ENCODE measurements at regions of chr10 and their contacts with region 1.

Region 1: DNA sequence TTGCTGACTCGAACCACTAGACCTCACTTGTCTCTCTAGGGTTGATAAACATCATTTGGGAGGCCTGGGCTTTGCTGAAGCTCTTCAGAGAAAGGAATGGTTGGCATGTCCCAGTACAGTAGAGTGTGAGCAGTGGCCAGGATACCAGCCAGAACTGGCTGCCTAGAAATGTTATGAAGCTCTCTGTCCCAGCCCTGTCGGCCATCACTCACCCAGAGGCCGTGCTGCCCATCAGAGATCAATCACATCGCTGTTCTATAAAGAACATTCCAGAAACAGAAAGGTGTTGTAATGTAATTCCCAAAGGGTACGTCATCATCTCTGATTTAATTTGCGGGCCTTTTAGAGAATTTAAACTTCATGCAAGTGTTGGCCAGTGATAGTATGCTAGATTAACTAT is 111.5 kb downstream of the PRPF18 start:
- DNase-seq: peak in 2 of 5 donors; percentile 44 to 77
- ATAC-seq: peak; percentile 88 to 91 (median 90)
- H3K4me3 ChIP-seq: no peak overlapping the region
- H3K27ac ChIP-seq: peak overlapping the region in 11 of 12 donors; percentile 23 to 78 (median 61)
- H3K4me1 ChIP-seq: peaks cover 0 to 73% (median 31%) of the 10 kb centered on the region in 12 donors
- H3K27me3 ChIP-seq: no peaks in the 10 kb centered on the region
- CTCF ChIP-seq: no peak
- POLR2A ChIP-seq: no peak

Region 2: DNA sequence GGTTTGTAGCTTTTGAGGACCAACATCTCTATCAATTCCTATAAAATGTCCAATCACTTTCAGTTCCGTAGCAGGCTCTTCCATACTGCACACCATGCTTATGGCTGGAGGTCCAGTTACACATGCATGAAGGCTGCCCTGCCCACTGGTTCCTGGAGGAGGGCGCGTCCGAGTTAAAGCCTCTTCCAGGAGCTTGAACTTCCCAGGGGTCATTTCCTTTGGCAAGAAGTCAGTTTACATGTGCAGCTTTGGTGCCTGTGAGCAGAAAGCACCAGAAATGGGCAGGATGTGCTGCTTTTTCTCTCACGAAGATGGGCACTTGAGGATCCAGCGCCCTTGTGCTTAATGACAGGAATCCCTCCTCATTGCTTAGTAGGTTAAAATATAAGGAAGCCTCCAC is 380.7 kb before region 1 on chr10:
- intact Hi-C with region 1: no loop called
- DNase-seq: peak in 2 of 5 donors; percentile 29 to 35
- ATAC-seq: peak in 3 of 4 donors; percentile 52 to 74 (median 61)
- H3K4me3 ChIP-seq: no peak overlapping the region
- H3K27ac ChIP-seq: no peak overlapping the region
- H3K4me1 ChIP-seq: peaks cover 0 to 11% (median 0%) of the 10 kb centered on the region in 12 donors
- H3K27me3 ChIP-seq: no peaks in the 10 kb centered on the region
- CTCF ChIP-seq: no peak
- POLR2A ChIP-seq: peak in 1 of 2 donors; percentile 11

Region 3: DNA sequence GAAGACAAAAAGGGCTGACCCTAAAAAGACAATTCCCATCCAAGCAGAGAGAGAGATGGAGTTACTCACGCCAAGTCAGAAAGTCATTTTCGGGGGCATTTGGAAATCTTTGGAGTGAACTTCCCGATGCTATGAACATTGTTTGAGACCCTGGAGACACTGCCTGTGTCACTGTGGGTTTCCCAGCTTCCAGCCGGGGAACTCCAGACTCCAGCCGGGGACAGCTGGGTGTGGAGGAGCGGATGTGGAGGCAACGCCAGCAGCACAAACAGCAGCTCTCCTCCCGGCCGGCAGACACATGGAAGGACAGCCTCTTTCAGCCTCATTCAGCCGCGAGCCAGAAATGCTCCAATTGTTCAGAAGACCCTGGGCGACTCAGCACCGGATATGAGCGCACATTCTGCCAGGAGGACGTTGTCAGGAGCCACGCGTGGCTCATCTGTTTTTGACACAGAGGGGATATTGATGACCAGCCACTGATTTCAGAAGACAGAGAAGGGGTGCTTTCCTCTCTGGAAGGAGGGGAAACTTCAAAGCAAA is 13.9 kb before region 1 on chr10:
- intact Hi-C with region 1: loop called in 2 of 10 experiments (anchors 1 to 2 kb)
- DNase-seq: peak; percentile 89 to 94 (median 90)
- ATAC-seq: peak; percentile 60 to 77 (median 68)
- H3K4me3 ChIP-seq: peak overlapping the region in 1 of 12 donors; percentile 0
- H3K27ac ChIP-seq: peak overlapping the region; percentile 60 to 95 (median 84)
- H3K4me1 ChIP-seq: peaks cover 11 to 64% (median 46%) of the 10 kb centered on the region in 12 donors
- H3K27me3 ChIP-seq: no peaks in the 10 kb centered on the region
- CTCF ChIP-seq: no peak
- POLR2A ChIP-seq: no peak